Ovary (tissue), 10 donors: ENCODE measurements at regions of chr15 and their contacts with region 1.

Region 1: GRCh38 chr15:96424674-96425073 is 94.2 kb downstream of the NR2F2 start:
- DNase-seq: no peak
- H3K4me3 ChIP-seq: no peak overlapping the region
- H3K27ac ChIP-seq: no peak overlapping the region
- H3K4me1 ChIP-seq: no peaks in the 10 kb centered on the region
- H3K27me3 ChIP-seq: no peaks in the 10 kb centered on the region
- CTCF ChIP-seq: no peak
- EP300 ChIP-seq: no peak
- POLR2A ChIP-seq: no peak

Region 2: DNA sequence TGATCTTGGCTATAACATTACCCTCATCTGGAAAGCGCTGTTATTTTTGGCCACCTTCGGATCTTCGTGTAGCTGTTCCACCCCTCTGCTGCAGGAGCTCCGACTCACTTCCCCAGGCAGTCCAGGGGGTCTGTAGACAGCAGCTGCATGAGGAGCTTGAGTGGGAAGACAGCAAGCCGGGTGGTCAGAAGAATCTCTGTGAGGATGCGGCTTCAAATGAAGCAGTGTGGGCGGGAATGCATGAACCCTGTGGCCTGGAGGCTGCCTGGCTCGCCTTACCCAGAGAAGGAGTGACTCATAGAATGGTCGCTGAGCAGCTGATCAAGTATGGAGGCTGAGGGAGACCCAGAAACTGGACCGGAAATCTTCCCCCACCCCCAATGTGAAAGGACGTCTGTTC is 139.4 kb before region 1 on chr15:
- intact Hi-C with region 1: no loop called
- DNase-seq: peak in 4 of 5 donors; percentile 35 to 66 (median 62)
- H3K4me3 ChIP-seq: no peak overlapping the region
- H3K27ac ChIP-seq: peak overlapping the region in 1 of 2 donors; percentile 24
- H3K4me1 ChIP-seq: peaks cover 13% of the 10 kb centered on the region
- H3K27me3 ChIP-seq: no peaks in the 10 kb centered on the region
- CTCF ChIP-seq: no peak
- EP300 ChIP-seq: no peak
- POLR2A ChIP-seq: no peak

Region 3: DNA sequence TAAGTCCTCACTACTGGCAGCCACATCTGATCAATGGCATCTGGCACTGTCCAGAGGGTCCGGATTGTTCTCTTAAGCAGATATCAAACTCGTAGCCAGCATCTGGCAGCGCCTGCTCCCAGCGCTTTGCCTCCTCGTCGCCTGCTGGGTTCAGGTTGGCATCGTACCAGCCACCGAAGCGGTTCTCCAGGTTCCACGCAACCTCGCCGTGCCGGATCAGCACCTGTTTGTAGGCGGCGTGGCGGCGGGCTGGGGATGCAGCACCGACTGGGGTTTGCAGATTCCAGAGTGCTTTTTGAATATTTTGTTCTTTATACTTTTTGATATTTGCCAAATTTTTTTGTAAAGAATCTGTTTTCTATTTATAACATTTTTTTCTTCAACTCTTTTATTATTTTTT is 17.4 kb after region 1 on chr15:
- intact Hi-C with region 1: loop called in 1 of 4 experiments (anchors 1 kb)
- DNase-seq: no peak
- H3K4me3 ChIP-seq: no peak overlapping the region
- H3K27ac ChIP-seq: no peak overlapping the region
- H3K4me1 ChIP-seq: no peaks in the 10 kb centered on the region
- H3K27me3 ChIP-seq: no peaks in the 10 kb centered on the region
- CTCF ChIP-seq: no peak
- EP300 ChIP-seq: no peak
- POLR2A ChIP-seq: no peak